ENCODE measurements at regions of chr3 and their contacts with region 1.

Region 1: DNA sequence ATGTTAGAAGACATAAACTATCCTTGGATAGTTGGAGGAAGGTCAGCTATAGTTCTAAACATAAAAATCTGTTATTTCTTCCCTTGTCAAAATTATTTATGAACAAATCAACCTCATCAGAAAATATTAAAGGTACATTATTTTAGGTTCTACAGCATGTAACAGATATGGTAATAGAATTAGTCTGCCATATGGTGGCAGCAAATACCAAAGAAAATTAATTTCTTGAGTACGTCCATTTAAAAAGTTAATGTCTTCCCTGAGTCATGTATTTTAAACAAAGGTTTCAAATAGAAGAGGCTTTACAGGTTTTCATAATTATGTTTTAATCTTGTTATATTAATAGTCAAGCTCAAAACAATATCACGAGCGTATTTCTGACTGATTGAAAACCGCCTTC is 17.9 kb upstream of the ANKRD28 start:
- DNase-seq: no peak
- H3K4me3 ChIP-seq: no peak overlapping the region
- H3K27me3 ChIP-seq: no peaks in the 10 kb centered on the region
- CTCF ChIP-seq: peak; percentile 30; the same call in 1 of the 2 replicates

Region 2: DNA sequence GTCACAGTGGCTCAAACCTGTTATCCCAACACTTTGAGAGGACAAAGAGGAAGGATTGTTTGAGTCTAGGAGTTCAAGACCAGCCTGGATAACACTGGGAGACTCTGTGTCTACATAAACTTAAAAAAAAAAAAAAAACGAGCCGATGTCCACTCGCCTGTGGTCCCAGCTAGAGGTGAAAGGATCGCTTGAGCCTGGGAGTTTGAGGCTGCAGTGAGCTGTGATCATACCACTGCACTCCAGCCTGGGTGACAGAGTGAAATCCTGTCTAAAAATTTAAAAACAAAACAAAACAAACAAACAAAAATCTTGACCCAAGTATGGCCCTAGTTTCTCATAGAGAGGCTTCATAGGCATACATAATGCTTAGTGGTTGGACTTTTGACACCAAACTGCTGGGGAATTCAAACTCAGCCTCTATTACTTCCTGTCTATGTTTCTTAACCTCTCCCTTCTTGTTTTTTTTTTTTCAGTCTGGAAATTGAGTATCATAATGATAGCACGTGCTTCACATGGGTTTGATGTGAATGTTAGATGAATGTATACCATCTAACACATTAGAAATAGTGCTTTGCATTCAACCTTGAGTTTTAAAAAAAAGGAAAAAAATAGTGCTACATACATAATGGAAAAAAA is 656.1 kb before region 1 on chr3:
- CTCF ChIA-PET with region 1: no interaction called
- POLR2A ChIA-PET with region 1: no interaction called
- DNase-seq: no peak
- H3K4me3 ChIP-seq: no peak overlapping the region
- H3K27me3 ChIP-seq: no peaks in the 10 kb centered on the region; the same call in 1 of the 2 replicates
- CTCF ChIP-seq: no peak

Region 3: DNA sequence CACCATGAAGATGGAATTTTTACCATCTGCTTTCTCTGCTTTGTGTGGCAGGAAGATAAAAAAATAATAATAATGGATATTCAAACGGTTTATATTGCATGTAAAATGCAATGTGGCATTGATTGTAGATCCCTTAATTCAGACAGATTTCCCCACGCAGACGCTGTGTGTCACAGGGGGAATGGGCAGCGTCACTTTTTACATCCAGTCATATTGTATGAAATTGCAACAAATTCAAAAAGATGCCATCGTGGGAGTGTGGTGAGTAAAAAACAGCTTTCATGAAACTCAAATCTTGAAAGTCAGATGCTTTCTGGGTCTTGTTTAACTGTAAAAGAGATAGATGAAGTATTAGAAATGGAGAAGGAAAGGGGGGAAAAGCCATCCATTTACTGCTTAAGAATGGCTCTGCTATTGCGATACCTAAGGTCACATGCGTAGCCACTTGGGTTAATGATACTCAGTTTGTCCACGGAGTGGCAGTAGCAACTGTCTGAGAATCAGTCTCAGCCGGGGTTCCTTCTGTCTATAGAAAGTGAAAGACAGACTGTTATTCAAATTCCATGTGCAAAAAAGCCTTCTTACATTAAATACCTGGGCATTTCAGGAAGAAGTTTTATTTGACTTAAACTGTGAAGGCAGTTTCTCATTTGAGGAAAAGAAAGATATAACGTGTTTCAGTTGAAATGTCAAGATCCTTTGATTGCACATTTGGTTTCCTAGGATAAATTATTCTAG is 185.7 kb before region 1 on chr3:
- CTCF ChIA-PET with region 1: interaction called, 57 read pairs
- POLR2A ChIA-PET with region 1: no interaction called
- DNase-seq: no peak
- H3K4me3 ChIP-seq: peak overlapping the region; percentile 8
- H3K27me3 ChIP-seq: no peaks in the 10 kb centered on the region
- CTCF ChIP-seq: peak; percentile 71

Region 4: GRCh38 chr3:15797642-15798303 is 17.9 kb before region 1 on chr3 and contains the start of gene ANKRD28:
- CTCF ChIA-PET with region 1: interaction called, 10 read pairs
- POLR2A ChIA-PET with region 1: interaction called, 3 read pairs
- DNase-seq: peak; percentile 97
- H3K4me3 ChIP-seq: peak within 1 kb of the TSS; percentile 80
- H3K27me3 ChIP-seq: no peaks in the 10 kb centered on the region
- CTCF ChIP-seq: peak; percentile 45
- polyA plus RNA-seq, gene ANKRD28: 50.9 and 92.5 TPM in 2 replicates

Region 5: DNA sequence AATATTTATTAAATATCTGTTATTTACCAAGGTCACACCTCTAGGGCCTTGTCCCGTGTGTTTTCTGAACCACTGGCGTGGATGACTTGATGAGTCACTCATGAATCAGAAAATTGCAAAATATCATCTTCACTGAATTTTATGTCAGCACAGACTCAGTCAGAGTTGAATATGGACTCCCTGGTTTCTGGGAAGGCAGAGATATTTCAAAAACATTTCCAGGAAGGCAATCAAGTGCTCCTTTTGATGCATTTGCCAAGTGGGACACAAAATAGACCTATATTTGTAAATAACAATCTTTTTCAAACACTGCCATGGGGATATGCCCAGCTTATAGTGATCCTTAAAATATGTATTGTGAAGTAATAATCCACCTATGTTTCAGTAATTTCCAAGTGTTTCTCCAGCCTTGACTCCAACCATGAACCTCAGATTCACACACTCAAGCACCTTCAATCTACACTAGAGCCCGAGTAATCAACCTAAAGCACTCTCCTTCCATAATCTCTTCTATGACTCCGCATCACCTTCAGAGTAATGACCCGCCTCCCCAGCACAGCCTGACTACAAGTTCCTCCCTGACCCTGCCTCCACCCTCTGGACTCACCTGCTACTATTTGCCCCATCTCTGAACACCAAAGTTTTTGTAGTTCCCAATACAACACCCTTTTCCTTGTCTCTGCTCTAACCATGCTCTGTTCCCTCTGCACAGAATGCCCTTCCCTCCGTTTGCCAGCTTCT is 424.8 kb after region 1 on chr3:
- CTCF ChIA-PET with region 1: interaction called, 15 read pairs
- POLR2A ChIA-PET with region 1: no interaction called
- DNase-seq: peak; percentile 42
- H3K4me3 ChIP-seq: no peak overlapping the region
- H3K27me3 ChIP-seq: no peaks in the 10 kb centered on the region
- CTCF ChIP-seq: no peak

Region 6: GRCh38 chr3:16247276-16248061 is 431.8 kb after region 1 on chr3:
- CTCF ChIA-PET with region 1: interaction called, 15 read pairs
- POLR2A ChIA-PET with region 1: no interaction called
- DNase-seq: peak; percentile 14
- H3K4me3 ChIP-seq: no peak overlapping the region
- H3K27me3 ChIP-seq: no peaks in the 10 kb centered on the region
- CTCF ChIP-seq: peak; percentile 90

Region 7: DNA sequence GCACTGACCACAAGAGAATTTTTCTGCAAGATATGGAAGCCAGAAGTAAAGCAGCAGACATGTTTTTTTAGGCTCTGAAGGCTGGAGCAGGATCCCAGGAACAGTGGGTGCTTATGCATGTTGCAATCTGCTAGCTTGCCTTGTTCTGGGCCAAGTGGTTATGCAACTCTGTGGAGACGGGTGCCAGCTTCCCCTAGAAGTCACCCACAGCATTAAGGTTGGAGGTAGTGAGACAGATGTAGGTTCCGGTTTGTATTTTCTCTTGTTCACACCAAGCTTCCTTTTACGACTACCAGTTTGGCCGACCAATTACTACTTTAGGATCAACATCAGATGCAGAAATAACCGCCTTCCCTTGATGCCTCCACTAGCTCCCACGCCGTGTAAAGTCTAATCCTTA is 437.9 kb after region 1 on chr3:
- CTCF ChIA-PET with region 1: interaction called, 10 read pairs
- POLR2A ChIA-PET with region 1: no interaction called
- DNase-seq: no peak
- H3K4me3 ChIP-seq: no peak overlapping the region
- H3K27me3 ChIP-seq: no peaks in the 10 kb centered on the region
- CTCF ChIP-seq: no peak